MCF 10A (cell line): ENCODE measurements at regions of chr20 and their contacts with region 1.

Region 1: GRCh38 chr20:20052074-20052970 is at the starts of genes CFAP61 and CRNKL1:
- DNase-seq: peak; percentile 96
- H3K4me3 Mint-ChIP-seq: peak within 1 kb of the TSS; percentile 97
- H3K27ac Mint-ChIP-seq: peak within 1 kb of the TSS; percentile 96
- H3K4me1 Mint-ChIP-seq: peaks cover 10% of the 10 kb centered on the region
- H3K27me3 Mint-ChIP-seq: no peaks in the 10 kb centered on the region
- CTCF ChIP-seq: no peak
- total RNA-seq, gene CFAP61: 1.4 and 1.5 TPM in 2 replicates
- total RNA-seq, gene CRNKL1: 19.4 and 20.1 TPM in 2 replicates

Region 2: DNA sequence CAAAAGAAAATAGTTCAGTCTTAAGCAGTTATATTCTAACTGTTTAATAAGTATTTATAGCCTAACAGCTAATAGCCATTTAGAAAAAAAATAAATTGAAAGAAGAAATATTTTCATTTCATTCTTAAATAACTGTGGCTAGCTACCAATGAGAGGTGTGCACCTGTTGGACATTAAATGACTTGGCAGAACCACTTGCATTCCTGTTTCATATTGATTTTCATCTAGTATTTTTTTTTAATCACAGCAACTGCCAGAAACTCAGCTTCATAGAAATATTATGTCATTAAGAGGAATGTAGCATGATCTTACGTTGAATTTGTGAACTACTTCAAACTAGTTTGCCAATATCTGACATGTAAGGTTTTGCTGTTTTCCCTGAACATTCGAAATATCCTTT is 25.0 kb before region 1 on chr20:
- CTCF ChIA-PET with region 1: interaction called, 10 read pairs
- POLR2A ChIA-PET with region 1: interaction called, 67 read pairs
- intact Hi-C with region 1: no loop called
- DNase-seq: no peak
- H3K4me3 Mint-ChIP-seq: no peak overlapping the region
- H3K27ac Mint-ChIP-seq: peak overlapping the region; percentile 12
- H3K4me1 Mint-ChIP-seq: no peaks in the 10 kb centered on the region
- H3K27me3 Mint-ChIP-seq: no peaks in the 10 kb centered on the region
- CTCF ChIP-seq: no peak

Region 3: DNA sequence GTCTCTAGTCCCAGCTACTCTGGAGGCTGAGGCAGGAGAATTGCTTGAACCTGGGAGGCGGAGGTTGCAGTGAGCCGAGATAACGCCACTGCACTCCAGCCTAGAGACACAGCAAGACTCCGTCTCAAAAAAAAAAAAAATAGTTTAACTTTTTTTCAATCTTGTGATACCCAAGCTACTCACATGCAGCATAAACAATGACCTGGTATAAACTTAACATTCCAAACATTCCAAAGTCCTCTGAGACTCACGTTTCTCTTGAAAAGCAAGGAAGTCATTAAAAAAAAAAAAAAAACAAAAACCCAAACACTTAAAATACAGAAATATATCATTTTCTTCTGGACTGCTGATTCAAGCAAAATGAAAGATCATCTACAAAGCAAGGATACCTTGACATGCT is 14.4 kb before region 1 on chr20:
- CTCF ChIA-PET with region 1: interaction called, 19 read pairs
- POLR2A ChIA-PET with region 1: interaction called, 31 read pairs
- intact Hi-C with region 1: no loop called
- DNase-seq: no peak
- H3K4me3 Mint-ChIP-seq: no peak overlapping the region
- H3K27ac Mint-ChIP-seq: no peak overlapping the region
- H3K4me1 Mint-ChIP-seq: peaks cover 5% of the 10 kb centered on the region
- H3K27me3 Mint-ChIP-seq: no peaks in the 10 kb centered on the region
- CTCF ChIP-seq: no peak

Region 4: DNA sequence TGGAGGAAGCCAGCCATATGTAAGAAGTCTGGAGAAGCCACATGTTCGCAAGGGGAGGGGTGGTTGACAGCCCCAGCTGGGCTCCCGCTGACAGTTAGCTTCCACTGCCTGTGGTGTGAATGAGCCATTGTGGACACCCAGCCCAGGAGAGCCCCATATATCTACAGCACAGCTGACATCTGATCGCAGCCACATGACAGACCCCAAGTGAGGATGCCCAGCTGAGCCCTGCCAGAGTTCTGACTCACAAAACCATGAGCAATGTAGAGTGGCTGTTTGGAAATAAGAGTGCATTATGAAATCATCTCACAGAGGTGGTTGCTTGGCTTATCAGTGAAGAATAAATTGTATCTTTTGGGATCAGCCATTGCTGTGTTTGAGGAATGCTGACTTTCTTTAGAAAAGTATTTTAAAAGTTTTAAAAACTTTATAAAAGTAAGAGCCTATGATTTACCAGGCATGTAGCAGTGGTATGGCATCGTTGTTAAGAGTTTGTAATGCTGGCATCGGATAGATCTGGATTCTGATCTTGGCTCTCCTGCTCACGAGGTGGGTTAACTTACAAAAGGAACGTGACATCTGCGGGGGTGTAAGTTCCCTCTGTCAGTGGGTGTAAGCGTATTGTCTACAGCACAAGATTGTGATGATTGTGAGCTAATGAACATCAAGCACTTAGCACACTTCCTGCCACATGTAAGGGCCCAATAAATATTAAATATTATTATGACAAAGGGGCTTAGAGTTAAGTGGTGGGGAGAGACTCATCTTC is 24.2 kb after region 1 on chr20:
- CTCF ChIA-PET with region 1: interaction called, 4 read pairs
- POLR2A ChIA-PET with region 1: interaction called, 12 read pairs
- intact Hi-C with region 1: no loop called
- DNase-seq: peak; percentile 61
- H3K4me3 Mint-ChIP-seq: no peak overlapping the region
- H3K27ac Mint-ChIP-seq: no peak overlapping the region
- H3K4me1 Mint-ChIP-seq: peaks cover 7% of the 10 kb centered on the region
- H3K27me3 Mint-ChIP-seq: no peaks in the 10 kb centered on the region
- CTCF ChIP-seq: no peak